B cell (primary cell): ENCODE measurements at regions of chr6 and their contacts with region 1.

Region 1: DNA sequence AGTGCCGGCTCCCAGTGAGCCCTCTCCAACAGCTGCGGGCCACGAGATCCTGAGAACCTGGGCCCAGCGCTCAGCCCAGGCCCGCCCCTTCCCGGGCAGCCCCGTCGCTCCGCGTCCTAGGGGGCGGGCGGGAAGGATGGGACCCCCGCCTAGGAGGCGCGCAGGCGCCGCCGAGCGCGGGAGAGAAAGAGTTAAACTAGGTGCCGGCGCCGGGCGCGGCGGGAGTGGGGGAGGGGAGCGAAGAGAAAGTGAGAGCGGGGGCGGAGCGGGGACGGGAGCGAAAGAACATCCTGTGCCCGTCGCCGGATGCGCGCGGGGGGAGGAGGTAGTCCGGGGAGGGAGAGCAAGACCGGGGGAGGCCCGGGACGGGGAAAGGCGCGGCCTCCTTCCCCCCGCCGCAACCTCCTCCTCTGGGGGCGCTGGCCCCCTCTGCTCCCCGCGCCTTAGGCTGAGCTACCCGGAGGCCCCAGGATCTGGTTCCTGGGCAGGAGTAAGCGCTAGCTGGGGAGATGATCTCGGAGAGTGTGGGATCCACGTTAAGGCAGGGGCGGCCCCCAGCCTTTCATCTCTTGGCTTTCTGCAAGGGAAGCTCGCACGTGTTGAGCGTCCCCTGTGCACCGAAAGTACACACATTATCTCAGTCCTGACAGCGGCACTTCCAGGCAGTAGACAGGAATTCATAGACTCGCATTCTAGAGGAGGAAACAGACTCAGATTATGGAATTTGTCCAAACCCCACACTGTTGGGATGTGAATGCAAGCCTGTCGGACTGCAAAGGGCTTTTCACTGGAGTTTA is 4.9 kb upstream of the ARMC12 start:
- DNase-seq: peak; percentile 95
- ATAC-seq: peak; percentile 64
- H3K4me3 ChIP-seq: peak overlapping the region; percentile 39 to 99 (median 92)
- H3K4me3 Mint-ChIP-seq: peak overlapping the region; percentile 94
- H3K27ac ChIP-seq: peak overlapping the region; percentile 94 to 99
- H3K27ac Mint-ChIP-seq: peak overlapping the region; percentile 96
- H3K4me1 ChIP-seq: peaks cover 51 to 61% of the 10 kb centered on the region in 2 donors
- H3K4me1 Mint-ChIP-seq: peaks cover 60% of the 10 kb centered on the region
- H3K27me3 ChIP-seq: peaks cover 0 to 1% (median 0%) of the 10 kb centered on the region in 4 experiments
- H3K27me3 Mint-ChIP-seq: peaks cover under 1% of the 10 kb centered on the region
- CTCF ChIP-seq: peak; percentile 11

Region 2: GRCh38 chr6:35297601-35298481 is 434.1 kb before region 1 on chr6 and contains the start of gene DEF6:
- CTCF ChIA-PET with region 1: interaction called, 25 read pairs
- POLR2A ChIA-PET with region 1: no interaction called
- intact Hi-C with region 1: loop called (anchors 1 kb)
- DNase-seq: peak; percentile 91
- ATAC-seq: peak; percentile 74
- H3K4me3 ChIP-seq: peak within 1 kb of the TSS; percentile 79 to 97 (median 95)
- H3K4me3 Mint-ChIP-seq: peak within 1 kb of the TSS; percentile 82
- H3K27ac ChIP-seq: peak within 1 kb of the TSS; percentile 87 to 98
- H3K27ac Mint-ChIP-seq: peak within 1 kb of the TSS; percentile 97
- H3K4me1 ChIP-seq: peaks cover 48 to 54% of the 10 kb centered on the region in 2 donors
- H3K4me1 Mint-ChIP-seq: peaks cover 50% of the 10 kb centered on the region
- H3K27me3 ChIP-seq: no peaks in the 10 kb centered on the region
- H3K27me3 Mint-ChIP-seq: no peaks in the 10 kb centered on the region
- CTCF ChIP-seq: peak; percentile 97
- total RNA-seq, gene DEF6: 105 and 116 TPM in 2 replicates

Region 3: GRCh38 chr6:35552285-35552917 is 179.5 kb before region 1 on chr6:
- CTCF ChIA-PET with region 1: interaction called, 12 read pairs
- POLR2A ChIA-PET with region 1: no interaction called
- intact Hi-C with region 1: no loop called
- DNase-seq: peak; percentile 51
- ATAC-seq: no peak
- H3K4me3 ChIP-seq: no peak overlapping the region
- H3K4me3 Mint-ChIP-seq: no peak overlapping the region
- H3K27ac ChIP-seq: no peak overlapping the region
- H3K27ac Mint-ChIP-seq: no peak overlapping the region
- H3K4me1 ChIP-seq: no peaks in the 10 kb centered on the region
- H3K4me1 Mint-ChIP-seq: no peaks in the 10 kb centered on the region
- H3K27me3 ChIP-seq: peaks cover 0 to 9% (median 2%) of the 10 kb centered on the region in 4 experiments
- H3K27me3 Mint-ChIP-seq: peaks cover 25% of the 10 kb centered on the region
- CTCF ChIP-seq: peak; percentile 76

Region 4: GRCh38 chr6:35590622-35591066 is 141.3 kb before region 1 on chr6:
- CTCF ChIA-PET with region 1: interaction called, 369 read pairs
- POLR2A ChIA-PET with region 1: interaction called, 4 read pairs
- intact Hi-C with region 1: no loop called
- DNase-seq: no peak
- ATAC-seq: no peak
- H3K4me3 ChIP-seq: no peak overlapping the region
- H3K4me3 Mint-ChIP-seq: no peak overlapping the region
- H3K27ac ChIP-seq: no peak overlapping the region
- H3K27ac Mint-ChIP-seq: no peak overlapping the region
- H3K4me1 ChIP-seq: no peaks in the 10 kb centered on the region
- H3K4me1 Mint-ChIP-seq: peaks cover 5% of the 10 kb centered on the region
- H3K27me3 ChIP-seq: no peaks in the 10 kb centered on the region
- H3K27me3 Mint-ChIP-seq: no peaks in the 10 kb centered on the region
- CTCF ChIP-seq: no peak

Region 5: DNA sequence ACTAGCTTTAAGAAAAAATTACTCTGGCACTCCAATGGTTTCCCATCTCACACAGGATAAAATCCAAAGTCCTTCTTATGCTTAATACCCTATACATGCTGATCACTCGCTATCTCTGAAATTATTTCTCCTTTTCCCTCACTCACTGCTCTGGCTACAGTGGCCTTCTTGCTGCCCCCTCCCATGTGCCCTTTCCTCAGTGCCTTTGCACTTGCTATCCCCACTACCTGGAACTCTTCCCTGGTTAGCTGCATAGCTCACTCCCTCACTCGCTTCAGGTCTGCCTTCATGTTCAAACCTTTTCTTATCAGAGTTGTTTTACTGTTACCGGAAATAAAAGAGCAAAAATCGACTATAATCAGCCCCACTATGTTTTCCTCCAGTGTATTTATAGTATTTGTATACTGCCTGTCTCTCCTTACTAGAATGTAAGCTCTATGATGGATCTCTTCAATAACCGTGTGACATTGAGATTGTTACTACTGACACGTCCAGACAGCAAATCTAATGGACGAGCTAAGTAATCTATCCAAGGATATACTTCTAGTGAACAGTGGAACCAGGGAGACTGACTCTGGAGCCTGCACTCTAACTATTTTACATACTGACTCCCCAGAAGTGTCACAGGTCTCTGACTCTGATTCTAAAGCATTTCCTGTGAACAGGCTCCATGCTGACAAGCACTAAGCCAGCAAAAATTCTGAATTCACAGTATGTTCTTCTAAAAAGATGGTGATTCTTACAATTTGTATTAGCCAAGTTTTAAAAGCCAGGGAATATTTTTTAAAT is 68.3 kb before region 1 on chr6:
- CTCF ChIA-PET with region 1: interaction called, 18 read pairs
- POLR2A ChIA-PET with region 1: interaction called, 3 read pairs
- intact Hi-C with region 1: no loop called
- DNase-seq: no peak
- ATAC-seq: no peak
- H3K4me3 ChIP-seq: no peak overlapping the region
- H3K4me3 Mint-ChIP-seq: no peak overlapping the region
- H3K27ac ChIP-seq: no peak overlapping the region
- H3K27ac Mint-ChIP-seq: no peak overlapping the region
- H3K4me1 ChIP-seq: peaks cover 17 to 30% of the 10 kb centered on the region in 2 donors
- H3K4me1 Mint-ChIP-seq: peaks cover 11% of the 10 kb centered on the region
- H3K27me3 ChIP-seq: no peaks in the 10 kb centered on the region
- H3K27me3 Mint-ChIP-seq: no peaks in the 10 kb centered on the region
- CTCF ChIP-seq: no peak

Region 6: DNA sequence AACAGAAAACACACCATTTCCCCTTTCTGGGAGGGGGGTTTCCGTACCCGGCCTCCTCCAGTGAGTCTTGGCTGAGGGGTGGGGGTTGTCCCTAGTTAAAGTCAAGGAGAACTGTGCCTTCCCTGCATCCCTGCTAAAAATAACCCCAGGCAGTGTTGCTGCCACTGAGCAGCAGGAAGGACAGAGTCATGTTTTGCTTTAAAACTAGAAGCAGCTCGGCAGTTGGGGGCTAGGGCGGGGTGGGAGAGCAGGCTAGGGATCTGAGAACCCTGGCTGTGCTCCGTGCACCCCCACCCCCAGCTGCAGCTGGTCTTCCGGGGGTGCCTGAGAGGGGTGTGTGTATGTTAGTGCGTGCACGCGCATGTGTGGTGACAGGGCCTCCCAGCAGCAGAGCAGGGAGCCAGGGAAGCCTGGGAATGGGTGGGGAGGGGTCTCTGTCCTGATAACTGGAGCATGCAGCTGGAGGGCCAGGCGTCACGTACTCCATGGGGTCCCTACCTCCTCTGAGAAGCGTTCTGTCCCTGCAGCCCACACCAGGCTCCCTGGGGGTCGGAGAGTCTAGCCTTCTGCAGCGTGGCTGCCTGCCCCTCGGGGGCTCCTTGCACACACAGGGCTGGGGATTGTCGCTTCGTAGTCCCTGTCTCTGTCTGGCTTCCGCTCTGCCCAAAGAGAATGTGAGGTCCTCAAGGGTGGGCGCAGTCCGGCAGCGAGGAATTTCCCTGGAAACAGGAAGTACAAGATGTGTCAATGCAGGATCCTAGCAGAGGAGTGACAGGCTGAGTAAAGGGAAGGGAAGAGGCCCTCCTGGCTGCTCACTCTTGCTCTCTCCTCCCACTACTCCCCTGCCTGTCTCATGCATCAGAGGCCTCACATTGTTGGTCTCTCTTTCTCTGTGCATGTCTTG is 11.9 kb before region 1 on chr6:
- CTCF ChIA-PET with region 1: interaction called, 48 read pairs
- POLR2A ChIA-PET with region 1: interaction called, 8 read pairs
- intact Hi-C with region 1: loop called (anchors 1 kb)
- DNase-seq: peak; percentile 84
- ATAC-seq: peak; percentile 73
- H3K4me3 ChIP-seq: peak overlapping the region in 4 of 5 experiments; percentile 21 to 49 (median 32)
- H3K4me3 Mint-ChIP-seq: peak overlapping the region; percentile 84
- H3K27ac ChIP-seq: peak overlapping the region; percentile 80 to 84
- H3K27ac Mint-ChIP-seq: peak overlapping the region; percentile 87
- H3K4me1 ChIP-seq: peaks cover 39 to 49% of the 10 kb centered on the region in 2 donors
- H3K4me1 Mint-ChIP-seq: peaks cover 49% of the 10 kb centered on the region
- H3K27me3 ChIP-seq: peaks cover 0 to 1% (median 0%) of the 10 kb centered on the region in 4 experiments
- H3K27me3 Mint-ChIP-seq: no peaks in the 10 kb centered on the region
- CTCF ChIP-seq: no peak